ENCODE measurements at regions of chr17 and their contacts with region 1.

Region 1: DNA sequence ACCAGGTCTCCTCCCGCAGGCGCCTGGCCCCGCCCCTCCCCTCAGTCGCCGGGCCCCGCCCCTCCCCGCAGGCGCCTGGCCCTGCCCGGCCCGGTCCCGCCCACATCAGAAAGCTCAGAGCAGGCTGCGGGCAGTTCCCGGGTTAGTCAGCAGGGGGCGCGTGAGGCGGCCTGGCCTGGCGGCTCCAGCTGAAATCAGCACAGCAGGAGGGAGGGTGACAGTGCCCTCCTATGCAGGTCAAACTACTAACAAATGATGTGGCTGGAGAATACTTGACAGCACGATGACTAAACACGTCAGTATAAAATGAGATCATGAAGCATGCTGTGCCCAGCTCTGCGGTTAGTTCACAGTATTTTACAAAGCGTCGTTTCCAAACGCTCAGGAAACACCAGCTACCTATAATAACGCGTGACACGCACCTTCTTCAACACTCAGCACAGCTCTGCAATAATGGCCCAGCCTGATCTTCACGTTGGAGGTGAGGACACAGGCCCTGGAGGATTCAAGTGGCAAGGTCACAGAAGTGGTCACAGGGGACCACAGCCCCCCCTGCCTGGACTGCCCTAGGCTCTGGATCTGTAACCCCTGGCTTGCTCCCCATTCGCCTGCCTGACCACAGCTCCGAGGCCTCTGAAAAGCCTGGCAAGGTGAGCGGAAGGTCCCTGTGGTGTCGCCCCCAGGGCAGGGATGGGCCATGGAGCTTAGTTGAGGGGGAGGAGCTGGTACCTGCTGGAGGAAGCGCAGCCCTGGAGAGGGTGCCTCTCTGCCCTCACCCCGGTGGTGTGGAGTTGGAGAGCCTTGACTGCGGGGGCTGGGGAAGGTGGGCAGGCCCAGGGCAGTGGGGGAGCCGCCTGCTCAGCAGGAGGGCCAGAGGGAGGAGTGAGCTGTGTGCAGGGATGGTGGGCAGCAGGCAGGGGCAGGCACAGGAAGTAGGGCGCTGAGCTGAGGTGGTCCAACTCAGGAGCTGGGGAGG is 81.2 kb downstream of the KCNJ12 start:
- DNase-seq: peak; percentile 91 to 97 (median 96)
- ATAC-seq: peak; percentile 91 to 93
- H3K4me3 ChIP-seq: no peak overlapping the region
- H3K27ac ChIP-seq: no peak overlapping the region
- H3K4me1 ChIP-seq: no peaks in the 10 kb centered on the region
- H3K27me3 ChIP-seq: no peaks in the 10 kb centered on the region

Region 2: DNA sequence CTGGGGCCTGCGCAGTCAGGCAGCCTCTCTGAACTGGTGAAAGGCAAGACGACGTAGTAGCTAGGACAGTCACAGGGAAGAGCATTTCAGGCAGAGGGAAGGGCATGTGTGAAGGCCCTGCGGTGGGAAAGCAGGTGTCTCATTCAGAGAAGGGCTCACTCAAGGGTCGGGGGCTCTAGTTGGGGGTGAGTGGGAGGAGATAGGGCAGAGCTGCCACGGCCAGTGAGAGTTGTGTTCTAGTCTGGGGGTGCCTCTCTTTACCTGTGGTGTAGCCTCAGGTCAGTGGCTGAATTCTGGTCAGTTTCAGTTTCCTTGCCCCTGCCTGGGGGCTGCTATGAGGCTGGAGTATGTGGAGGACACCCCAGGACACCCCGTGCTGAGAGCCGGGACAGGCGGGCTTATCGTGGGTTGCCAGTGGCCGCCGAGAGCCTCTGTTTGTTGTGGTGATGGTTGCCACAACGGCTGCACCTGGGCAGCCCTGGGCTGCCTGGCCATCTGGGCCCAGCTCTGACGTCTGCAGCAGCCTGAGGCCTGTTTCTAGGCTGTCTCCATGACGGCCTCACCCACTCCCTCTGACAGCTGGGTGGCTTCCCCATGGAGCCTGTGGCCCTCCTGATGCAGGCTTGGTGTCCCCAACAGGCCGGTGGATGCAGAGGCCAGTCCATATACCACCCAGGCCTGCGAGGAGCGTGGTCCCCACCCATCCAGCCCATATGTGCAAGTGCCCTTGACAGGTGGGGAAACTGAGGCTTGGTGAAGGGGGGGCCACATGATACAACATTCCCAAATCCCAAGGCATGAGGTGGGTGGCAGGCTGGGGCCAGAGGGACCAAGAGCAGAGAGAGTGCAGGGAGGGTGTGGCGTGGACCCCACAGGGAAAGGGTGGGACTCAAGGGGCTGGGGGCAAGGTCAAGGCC is 162.0 kb before region 1 on chr17:
- intact Hi-C with region 1: no loop called
- DNase-seq: peak in 2 of 3 donors; percentile 82 to 83
- ATAC-seq: peak; percentile 56 to 57
- H3K4me3 ChIP-seq: no peak overlapping the region
- H3K27ac ChIP-seq: peak overlapping the region; percentile 26
- H3K4me1 ChIP-seq: peaks cover 3% of the 10 kb centered on the region
- H3K27me3 ChIP-seq: no peaks in the 10 kb centered on the region

Region 3: DNA sequence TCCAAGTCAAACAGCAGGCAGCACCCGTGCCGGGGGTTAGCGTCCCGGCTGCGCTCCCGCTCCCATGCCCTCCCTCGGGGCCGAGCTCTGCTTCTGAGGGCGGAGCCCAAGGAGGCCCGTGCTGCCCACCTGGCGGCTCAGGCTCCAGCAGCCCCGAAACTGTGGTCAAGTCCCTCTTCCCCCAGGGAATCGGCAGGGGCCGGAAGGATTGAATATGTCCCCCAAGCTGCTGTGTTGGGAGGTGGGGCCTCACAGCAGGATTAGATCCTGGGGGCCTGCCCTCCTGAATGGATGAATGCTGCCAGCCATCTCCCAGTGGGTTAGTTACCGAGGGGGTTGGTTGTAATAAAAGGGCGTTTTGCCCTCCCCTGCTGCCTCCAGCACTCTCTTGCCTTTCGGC is 138.9 kb before region 1 on chr17:
- intact Hi-C with region 1: loop called in 1 of 4 experiments (anchors 10 kb)
- DNase-seq: peak in 1 of 3 donors; percentile 69
- ATAC-seq: no peak
- H3K4me3 ChIP-seq: no peak overlapping the region
- H3K27ac ChIP-seq: no peak overlapping the region
- H3K4me1 ChIP-seq: no peaks in the 10 kb centered on the region
- H3K27me3 ChIP-seq: no peaks in the 10 kb centered on the region